ENCODE measurements at regions of chr17 and their contacts with region 1.

Region 1: DNA sequence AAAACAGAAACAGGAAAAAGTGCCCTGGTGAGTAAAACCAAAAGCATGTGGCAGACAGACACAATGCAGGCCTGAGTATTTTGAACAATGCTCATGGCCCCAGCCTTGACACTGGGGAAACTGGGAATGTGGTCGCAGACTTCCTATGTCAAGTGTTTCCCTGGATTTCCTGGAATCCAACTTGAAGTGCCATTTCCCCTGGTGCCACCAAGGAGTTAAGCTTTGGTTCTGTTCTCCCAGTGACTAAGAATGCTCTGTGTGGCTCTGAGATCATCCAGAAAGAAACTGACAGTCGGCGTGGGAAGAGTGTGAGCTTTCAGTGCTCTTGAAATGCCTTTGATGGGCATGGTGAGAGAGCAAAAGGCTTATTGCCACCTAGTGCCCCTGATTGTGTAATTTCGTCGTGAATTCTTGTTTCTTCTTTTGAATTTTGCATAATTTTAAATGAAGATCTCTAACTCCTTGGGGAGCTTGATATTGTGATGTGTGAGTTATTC is 96.0 kb downstream of the YPEL2 start:
- DNase-seq: peak in 4 of 5 donors; percentile 32 to 51 (median 46)
- ATAC-seq: peak; percentile 36 to 63 (median 52)
- H3K4me3 ChIP-seq: no peak overlapping the region
- H3K27ac ChIP-seq: peak overlapping the region; percentile 69 to 96 (median 92)
- H3K4me1 ChIP-seq: peaks cover 4 to 70% (median 65%) of the 10 kb centered on the region in 12 donors
- H3K27me3 ChIP-seq: no peaks in the 10 kb centered on the region
- CTCF ChIP-seq: peak in 1 of 12 donors; percentile 4
- POLR2A ChIP-seq: no peak

Region 2: DNA sequence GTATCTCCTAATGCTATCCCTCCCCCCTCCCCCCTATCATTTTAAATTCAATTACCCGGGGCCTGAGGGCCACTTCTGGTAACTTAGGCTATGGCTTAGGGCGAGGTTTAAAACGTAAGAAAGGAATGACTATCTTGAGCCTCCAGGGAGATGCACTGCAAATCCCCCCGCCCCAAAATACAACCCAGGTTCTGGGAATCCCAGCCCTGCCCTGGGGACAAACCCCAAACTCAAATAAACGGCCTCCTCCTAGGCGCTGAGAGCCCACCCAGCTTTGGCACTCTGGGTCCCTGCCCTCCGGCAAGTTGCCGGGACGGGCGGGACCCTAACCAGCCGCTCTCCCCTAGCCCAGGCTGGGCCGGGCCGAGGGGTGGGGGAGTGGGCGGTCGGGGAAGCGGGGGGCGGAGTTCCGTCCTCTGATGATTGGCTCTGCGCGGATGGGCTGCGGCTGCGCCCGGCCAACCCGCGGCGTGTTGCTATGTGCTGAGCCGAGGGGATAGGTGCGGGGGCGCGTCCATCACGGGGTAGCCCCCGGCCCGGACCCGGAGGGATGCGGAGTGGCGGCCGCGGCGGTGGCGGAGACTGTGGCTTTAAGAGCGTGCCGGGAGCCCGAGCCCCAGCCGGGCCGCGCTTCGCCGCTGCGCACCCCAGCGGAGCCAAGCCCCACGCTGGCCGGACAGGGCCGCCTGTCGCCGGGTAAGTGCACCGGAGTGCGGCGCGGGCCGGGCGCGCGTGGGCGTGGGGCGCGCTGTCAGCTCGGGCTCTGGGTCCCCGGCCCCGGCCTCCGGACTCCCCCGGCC is 96.1 kb before region 1 on chr17 and contains the start of gene YPEL2:
- intact Hi-C with region 1: loop called in 7 of 10 experiments (anchors 1 to 10 kb)
- DNase-seq: peak; percentile 98 to 99 (median 98)
- ATAC-seq: peak; percentile 93 to 96 (median 94)
- H3K4me3 ChIP-seq: peak within 1 kb of the TSS; percentile 75 to 99 (median 96)
- H3K27ac ChIP-seq: peak within 1 kb of the TSS; percentile 89 to 100 (median 97)
- H3K4me1 ChIP-seq: peaks cover 3 to 79% (median 70%) of the 10 kb centered on the region in 12 donors
- H3K27me3 ChIP-seq: no peaks in the 10 kb centered on the region
- CTCF ChIP-seq: no peak
- POLR2A ChIP-seq: peak; percentile 88 to 97
- total RNA-seq, gene YPEL2: 14.9 to 65.5 (median 40.8) TPM

Region 3: DNA sequence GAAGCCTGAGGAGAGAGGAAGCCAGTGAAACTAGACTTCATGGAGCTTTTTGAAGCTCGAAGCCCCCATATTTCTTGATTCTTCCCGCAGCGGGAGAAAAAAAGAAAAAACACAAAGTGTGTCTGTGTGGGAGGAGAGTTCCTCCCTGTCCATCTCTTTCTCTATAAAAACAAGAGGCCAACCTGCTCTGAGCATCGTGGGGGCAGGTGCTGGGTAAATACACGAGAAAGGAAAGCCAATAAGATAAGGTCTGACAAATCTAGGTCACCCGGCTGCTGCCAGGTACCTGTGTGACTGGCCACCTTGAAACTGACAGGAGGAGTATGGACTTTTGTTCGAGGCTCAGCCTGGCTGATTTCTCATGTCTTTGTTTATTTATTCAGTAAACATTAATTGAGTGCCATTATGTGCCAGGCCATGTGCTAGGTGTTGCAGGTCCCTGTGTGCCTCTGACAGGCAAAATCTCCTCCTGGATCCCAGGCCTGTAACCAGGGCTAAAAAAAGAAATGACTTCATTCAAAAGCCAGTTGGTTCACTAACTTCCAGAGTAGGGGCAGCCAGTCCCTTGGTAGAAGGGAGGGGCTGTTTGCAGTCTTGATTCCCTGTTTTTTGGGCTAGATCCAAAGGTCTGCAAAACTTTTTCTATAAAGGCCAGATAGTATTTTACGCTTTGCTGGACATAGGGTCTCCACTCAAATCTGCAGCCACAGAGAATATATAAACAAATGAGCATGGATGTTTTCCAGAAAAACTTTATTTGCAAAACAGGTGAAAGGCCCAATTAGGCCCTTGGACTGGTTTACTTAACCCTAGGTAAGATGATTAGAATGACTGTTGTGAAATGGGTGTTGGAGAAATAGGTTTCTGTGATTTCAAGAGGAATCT is 60.5 kb before region 1 on chr17:
- intact Hi-C with region 1: loop called in 8 of 10 experiments (anchors 5 kb)
- DNase-seq: peak in 4 of 5 donors; percentile 55 to 70 (median 59)
- ATAC-seq: peak; percentile 69 to 84 (median 73)
- H3K4me3 ChIP-seq: peak overlapping the region in 4 of 12 donors; percentile 1 to 9 (median 6)
- H3K27ac ChIP-seq: peak overlapping the region; percentile 80 to 99 (median 94)
- H3K4me1 ChIP-seq: peaks cover 48 to 100% (median 99%) of the 10 kb centered on the region in 12 donors
- H3K27me3 ChIP-seq: no peaks in the 10 kb centered on the region
- CTCF ChIP-seq: no peak
- POLR2A ChIP-seq: no peak

Region 4: DNA sequence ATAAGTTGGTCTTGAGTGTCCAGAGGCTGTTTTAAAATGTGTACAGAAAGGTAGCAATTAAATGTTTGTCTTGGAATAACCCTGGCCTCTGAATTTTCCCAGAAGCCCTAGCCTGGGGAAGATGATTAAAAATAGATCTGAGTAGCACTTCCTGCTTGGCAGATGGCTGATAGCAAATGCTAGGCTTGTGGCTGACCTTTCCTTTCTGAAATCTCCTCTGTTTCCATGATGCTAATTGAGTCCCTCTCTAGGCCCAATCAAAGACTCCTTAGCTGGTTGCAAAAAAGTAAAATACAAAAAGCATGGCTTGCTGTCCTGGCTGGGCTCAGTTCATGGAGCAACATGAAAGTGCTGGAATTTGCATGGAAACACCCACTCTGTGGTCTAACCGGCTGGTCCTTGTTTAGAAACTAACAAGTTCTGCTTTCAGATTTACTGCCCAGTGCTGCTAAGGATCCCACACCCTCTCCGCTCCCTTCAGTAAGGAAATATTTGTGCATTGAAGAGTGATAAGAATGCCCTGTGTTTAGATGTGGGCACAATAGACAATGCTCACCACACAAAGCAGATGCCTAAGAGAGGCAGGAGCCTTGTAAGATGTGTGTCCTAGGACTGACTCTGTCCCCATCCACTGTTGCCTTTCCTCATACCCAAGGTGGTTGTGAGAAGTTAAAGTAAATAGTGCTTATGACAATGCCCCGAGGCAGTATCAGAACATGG is 55.2 kb before region 1 on chr17:
- intact Hi-C with region 1: loop called in 9 of 10 experiments (anchors 5 kb)
- DNase-seq: peak in 4 of 5 donors; percentile 50 to 74 (median 58)
- ATAC-seq: peak; percentile 75 to 88 (median 81)
- H3K4me3 ChIP-seq: peak overlapping the region in 5 of 12 donors; percentile 4 to 36 (median 24)
- H3K27ac ChIP-seq: peak overlapping the region; percentile 89 to 99 (median 94)
- H3K4me1 ChIP-seq: peaks cover 48 to 100% (median 98%) of the 10 kb centered on the region in 12 donors
- H3K27me3 ChIP-seq: no peaks in the 10 kb centered on the region
- CTCF ChIP-seq: no peak
- POLR2A ChIP-seq: peak in 1 of 2 donors; percentile 16

Region 5: GRCh38 chr17:59378458-59379074 is 48.9 kb before region 1 on chr17:
- intact Hi-C with region 1: loop called in 7 of 10 experiments (anchors 5 kb)
- DNase-seq: no peak
- ATAC-seq: peak in 3 of 4 donors; percentile 22 to 48 (median 40)
- H3K4me3 ChIP-seq: no peak overlapping the region
- H3K27ac ChIP-seq: peak overlapping the region; percentile 55 to 99 (median 91)
- H3K4me1 ChIP-seq: peaks cover 42 to 100% (median 90%) of the 10 kb centered on the region in 12 donors
- H3K27me3 ChIP-seq: no peaks in the 10 kb centered on the region
- CTCF ChIP-seq: no peak
- POLR2A ChIP-seq: no peak

Region 6: GRCh38 chr17:59387351-59388068 is 40.0 kb before region 1 on chr17:
- intact Hi-C with region 1: loop called in 3 of 10 experiments (anchors 5 kb)
- DNase-seq: no peak
- ATAC-seq: peak; percentile 42 to 52 (median 47)
- H3K4me3 ChIP-seq: no peak overlapping the region
- H3K27ac ChIP-seq: peak overlapping the region in 11 of 12 donors; percentile 30 to 80 (median 65)
- H3K4me1 ChIP-seq: peaks cover 0 to 72% (median 39%) of the 10 kb centered on the region in 12 donors
- H3K27me3 ChIP-seq: no peaks in the 10 kb centered on the region
- CTCF ChIP-seq: no peak
- POLR2A ChIP-seq: no peak

Region 7: GRCh38 chr17:59487161-59487873 is 59.8 kb after region 1 on chr17:
- intact Hi-C with region 1: no loop called
- DNase-seq: no peak
- ATAC-seq: no peak
- H3K4me3 ChIP-seq: peak overlapping the region in 3 of 12 donors; percentile 17 to 22 (median 20)
- H3K27ac ChIP-seq: peak overlapping the region in 1 of 12 donors; percentile 54
- H3K4me1 ChIP-seq: peaks cover 0 to 20% (median 0%) of the 10 kb centered on the region in 12 donors
- H3K27me3 ChIP-seq: no peaks in the 10 kb centered on the region
- CTCF ChIP-seq: no peak
- POLR2A ChIP-seq: no peak

Region 8: GRCh38 chr17:59513934-59514841 is 86.7 kb after region 1 on chr17:
- intact Hi-C with region 1: no loop called
- DNase-seq: peak; percentile 75 to 93 (median 80)
- ATAC-seq: peak; percentile 32 to 76 (median 68)
- H3K4me3 ChIP-seq: no peak overlapping the region
- H3K27ac ChIP-seq: peak overlapping the region in 1 of 12 donors; percentile 68
- H3K4me1 ChIP-seq: peaks cover 0 to 37% (median 6%) of the 10 kb centered on the region in 12 donors
- H3K27me3 ChIP-seq: no peaks in the 10 kb centered on the region
- CTCF ChIP-seq: no peak
- POLR2A ChIP-seq: no peak

Measured in heart left ventricle (tissue), 16 donors.